CD8-positive, alpha-beta T cell (primary cell): ENCODE measurements at regions of chr6 and their contacts with region 1.

Region 1: DNA sequence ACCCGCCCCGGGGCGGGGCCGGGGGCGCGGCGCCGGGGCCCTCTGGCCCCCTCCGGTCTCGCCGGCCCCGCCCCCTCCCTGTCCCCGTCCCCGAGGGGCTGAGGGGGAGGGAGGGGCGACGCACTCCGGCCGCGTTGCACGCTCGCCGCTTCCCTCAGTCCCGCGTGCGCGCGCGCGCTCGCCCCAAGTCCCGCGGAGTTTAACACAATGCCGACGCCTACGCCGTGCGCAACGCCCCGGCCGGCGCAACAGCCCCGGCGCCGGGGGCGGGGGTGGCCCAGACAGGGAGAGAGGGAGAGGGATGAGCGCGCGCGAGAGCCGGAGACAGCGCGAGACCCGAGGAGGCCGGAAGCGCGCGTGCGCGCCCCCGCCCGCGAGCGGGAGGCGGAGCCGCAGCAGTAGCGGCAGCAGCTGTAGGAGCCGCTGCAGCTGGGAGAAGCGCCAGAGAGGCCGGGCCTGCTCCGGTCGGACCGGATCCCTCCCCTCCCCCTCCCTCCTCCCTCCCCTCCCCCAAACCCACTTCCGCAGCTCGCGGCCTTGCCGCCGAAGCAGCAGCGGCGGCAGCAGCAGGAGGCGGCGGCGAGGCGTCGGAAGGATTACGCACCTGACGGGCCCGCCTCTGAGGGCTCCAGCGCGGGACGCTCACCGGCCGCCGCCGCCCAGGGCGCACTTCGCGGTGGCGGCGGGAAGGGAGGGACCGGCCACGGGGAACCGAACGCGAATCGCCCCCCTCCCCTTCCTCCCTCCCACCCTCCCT is 905 bp downstream of the ZBTB2 start:
- DNase-seq: peak; percentile 92 to 100 (median 98)
- ATAC-seq: peak; percentile 76
- H3K4me3 ChIP-seq: peak overlapping the region; percentile 66 to 92
- H3K4me3 Mint-ChIP-seq: peak overlapping the region; percentile 98
- H3K27ac ChIP-seq: peak overlapping the region; percentile 89 to 94
- H3K27ac Mint-ChIP-seq: peak overlapping the region; percentile 99
- H3K4me1 ChIP-seq: peaks cover 56% of the 10 kb centered on the region
- H3K4me1 Mint-ChIP-seq: peaks cover 66% of the 10 kb centered on the region
- H3K27me3 ChIP-seq: no peaks in the 10 kb centered on the region
- H3K27me3 Mint-ChIP-seq: no peaks in the 10 kb centered on the region
- CTCF ChIP-seq: no peak

Region 2: DNA sequence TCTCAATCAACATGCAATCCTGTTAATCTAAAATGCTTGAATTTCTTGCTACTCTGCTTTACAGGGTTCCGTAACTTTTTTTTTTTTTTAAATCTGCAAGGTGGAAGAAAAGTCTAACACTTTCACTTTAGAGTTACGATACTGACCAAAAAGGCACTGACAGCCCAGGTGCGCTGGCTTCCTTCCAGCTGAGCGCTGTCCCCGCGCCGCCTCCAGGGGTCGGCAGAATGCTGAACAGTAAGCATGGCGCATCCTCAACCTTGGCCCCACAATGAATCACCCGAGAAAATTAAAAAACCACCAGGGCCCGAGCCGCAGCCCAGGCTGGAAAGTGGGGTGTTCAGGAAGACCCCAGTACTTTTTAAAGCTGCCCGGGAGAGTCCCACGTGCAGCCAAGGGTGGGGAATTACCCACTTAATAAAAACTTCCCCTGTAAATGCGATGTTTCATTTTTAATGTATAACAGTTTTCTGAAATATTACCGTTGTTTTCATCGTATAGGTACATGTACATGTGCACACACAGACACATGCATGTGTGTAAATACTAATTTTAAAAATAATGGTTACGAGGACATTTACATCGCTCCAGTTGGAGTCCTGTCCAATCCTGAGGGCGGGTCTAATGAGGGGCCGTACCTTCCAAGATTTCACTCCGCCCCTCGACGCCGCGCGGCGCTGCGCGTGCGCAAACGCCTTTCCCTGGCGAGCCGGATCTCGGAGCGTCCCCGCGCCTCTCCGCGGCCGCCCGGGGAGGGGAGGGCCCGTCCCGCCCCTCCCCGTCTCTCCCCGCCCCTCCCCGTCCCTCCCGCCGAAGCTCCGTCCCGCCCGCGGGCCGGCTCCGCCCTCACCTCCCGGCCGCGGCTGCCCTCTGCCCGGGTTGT is 1824.7 kb before region 1 on chr6 and contains the start of gene GINM1:
- CTCF ChIA-PET with region 1: no interaction called
- POLR2A ChIA-PET with region 1: no interaction called
- intact Hi-C with region 1: loop called in 1 of 2 experiments (anchors 10 kb)
- DNase-seq: peak; percentile 91 to 97 (median 94)
- ATAC-seq: peak; percentile 83
- H3K4me3 ChIP-seq: peak within 1 kb of the TSS; percentile 84 to 98
- H3K4me3 Mint-ChIP-seq: peak within 1 kb of the TSS; percentile 88
- H3K27ac ChIP-seq: peak within 1 kb of the TSS; percentile 75 to 88
- H3K27ac Mint-ChIP-seq: peak within 1 kb of the TSS; percentile 95
- H3K4me1 ChIP-seq: peaks cover 7% of the 10 kb centered on the region
- H3K4me1 Mint-ChIP-seq: peaks cover 18% of the 10 kb centered on the region
- H3K27me3 ChIP-seq: no peaks in the 10 kb centered on the region
- H3K27me3 Mint-ChIP-seq: no peaks in the 10 kb centered on the region
- CTCF ChIP-seq: peak; percentile 78
- total RNA-seq, gene GINM1: 32.7 to 35.2 TPM

Region 3: GRCh38 chr6:151370509-151371078 is 19.9 kb before region 1 on chr6:
- CTCF ChIA-PET with region 1: interaction called, 4 read pairs
- POLR2A ChIA-PET with region 1: interaction called, 44 read pairs
- intact Hi-C with region 1: loop called (anchors 1 to 2 kb)
- DNase-seq: peak in 1 of 9 experiments; percentile 34
- ATAC-seq: no peak
- H3K4me3 ChIP-seq: no peak overlapping the region
- H3K4me3 Mint-ChIP-seq: no peak overlapping the region
- H3K27ac ChIP-seq: peak overlapping the region in 1 of 2 experiments; percentile 66
- H3K27ac Mint-ChIP-seq: peak overlapping the region; percentile 4
- H3K4me1 ChIP-seq: peaks cover 39% of the 10 kb centered on the region
- H3K4me1 Mint-ChIP-seq: peaks cover 40% of the 10 kb centered on the region
- H3K27me3 ChIP-seq: no peaks in the 10 kb centered on the region
- H3K27me3 Mint-ChIP-seq: no peaks in the 10 kb centered on the region
- CTCF ChIP-seq: no peak

Region 4: DNA sequence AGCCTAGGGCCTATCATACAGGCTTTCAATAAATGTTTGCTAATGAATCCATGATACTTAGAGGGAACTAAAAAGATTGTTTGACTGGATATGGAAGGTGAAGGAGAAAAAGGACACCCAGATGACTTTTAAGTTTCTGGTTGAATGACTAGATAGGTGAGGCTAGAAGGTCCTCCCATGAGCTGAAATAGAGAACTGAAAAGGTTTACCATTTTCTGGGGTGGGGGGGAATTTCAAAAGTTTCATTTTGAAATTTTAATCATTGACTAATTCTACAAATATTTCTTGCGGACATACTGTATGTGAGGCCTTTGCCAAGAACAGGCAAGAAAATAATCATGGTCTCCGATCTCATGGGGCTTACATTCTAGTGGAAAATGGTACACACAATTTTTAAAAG is 18.8 kb after region 1 on chr6:
- CTCF ChIA-PET with region 1: interaction called, 52 read pairs
- POLR2A ChIA-PET with region 1: interaction called, 15 read pairs
- intact Hi-C with region 1: loop called (anchors 1 to 2 kb)
- DNase-seq: no peak
- ATAC-seq: no peak
- H3K4me3 ChIP-seq: no peak overlapping the region
- H3K4me3 Mint-ChIP-seq: no peak overlapping the region
- H3K27ac ChIP-seq: no peak overlapping the region
- H3K27ac Mint-ChIP-seq: peak overlapping the region; percentile 62
- H3K4me1 ChIP-seq: peaks cover 14% of the 10 kb centered on the region
- H3K4me1 Mint-ChIP-seq: peaks cover 34% of the 10 kb centered on the region
- H3K27me3 ChIP-seq: no peaks in the 10 kb centered on the region
- H3K27me3 Mint-ChIP-seq: no peaks in the 10 kb centered on the region
- CTCF ChIP-seq: no peak

Region 5: GRCh38 chr6:152170705-152171667 is 780.5 kb after region 1 on chr6:
- CTCF ChIA-PET with region 1: no interaction called
- POLR2A ChIA-PET with region 1: no interaction called
- intact Hi-C with region 1: loop called in 1 of 2 experiments (anchors 10 kb)
- DNase-seq: peak in 5 of 9 experiments; percentile 23 to 85 (median 56)
- ATAC-seq: peak; percentile 81
- H3K4me3 ChIP-seq: peak overlapping the region in 1 of 2 experiments; percentile 22
- H3K4me3 Mint-ChIP-seq: peak overlapping the region; percentile 76
- H3K27ac ChIP-seq: peak overlapping the region; percentile 40 to 84
- H3K27ac Mint-ChIP-seq: peak overlapping the region; percentile 96
- H3K4me1 ChIP-seq: peaks cover 13% of the 10 kb centered on the region
- H3K4me1 Mint-ChIP-seq: peaks cover 56% of the 10 kb centered on the region
- H3K27me3 ChIP-seq: no peaks in the 10 kb centered on the region
- H3K27me3 Mint-ChIP-seq: no peaks in the 10 kb centered on the region
- CTCF ChIP-seq: no peak

Region 6: DNA sequence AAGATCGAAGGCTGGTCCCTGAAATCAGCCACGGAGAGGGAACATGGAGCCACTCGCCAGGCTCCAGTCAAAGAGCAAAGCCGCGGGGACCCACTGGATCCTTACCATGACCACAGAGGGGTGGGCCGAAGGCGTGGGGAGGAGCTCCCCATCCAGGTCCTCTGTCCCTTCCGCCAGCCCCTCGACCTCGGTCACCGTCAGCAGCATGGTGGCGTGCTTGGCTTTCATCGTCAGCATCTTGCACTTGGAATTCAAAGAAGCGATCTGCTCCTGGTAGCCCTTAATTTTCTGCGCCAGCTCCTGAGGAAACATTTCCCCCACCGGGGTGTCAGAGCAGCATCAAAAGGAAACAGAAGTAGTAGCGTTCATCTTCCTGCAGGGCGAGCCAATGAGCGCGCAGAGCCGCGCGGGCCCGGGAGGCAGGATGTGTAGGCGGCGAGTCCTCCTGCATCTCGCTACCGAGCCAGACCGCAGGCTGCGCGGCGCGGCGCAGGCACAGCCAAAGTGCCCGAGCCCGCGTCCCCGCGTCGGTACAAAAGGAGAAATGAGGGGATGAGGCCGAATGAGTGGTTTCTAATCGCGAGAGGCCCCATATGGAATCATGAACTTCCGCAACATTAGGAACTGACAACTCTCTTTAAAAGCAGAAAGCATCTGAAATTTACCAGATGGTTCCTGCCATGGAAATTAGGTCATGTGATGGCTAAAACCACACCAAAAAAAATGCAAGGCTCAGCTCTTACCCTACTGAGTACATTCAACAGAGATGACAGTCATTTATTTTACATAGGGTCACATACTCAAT is 911.5 kb after region 1 on chr6:
- CTCF ChIA-PET with region 1: no interaction called
- POLR2A ChIA-PET with region 1: interaction called, 3 read pairs
- intact Hi-C with region 1: loop called in 1 of 2 experiments (anchors 5 kb)
- DNase-seq: peak; percentile 71 to 94 (median 87)
- ATAC-seq: peak; percentile 97
- H3K4me3 ChIP-seq: peak overlapping the region; percentile 83 to 88
- H3K4me3 Mint-ChIP-seq: peak overlapping the region; percentile 100
- H3K27ac ChIP-seq: peak overlapping the region; percentile 82 to 85
- H3K27ac Mint-ChIP-seq: peak overlapping the region; percentile 100
- H3K4me1 ChIP-seq: peaks cover 21% of the 10 kb centered on the region
- H3K4me1 Mint-ChIP-seq: peaks cover 41% of the 10 kb centered on the region
- H3K27me3 ChIP-seq: no peaks in the 10 kb centered on the region
- H3K27me3 Mint-ChIP-seq: no peaks in the 10 kb centered on the region
- CTCF ChIP-seq: peak; percentile 77